ENCODE measurements at regions of chr6 and their contacts with region 1.

Region 1: DNA sequence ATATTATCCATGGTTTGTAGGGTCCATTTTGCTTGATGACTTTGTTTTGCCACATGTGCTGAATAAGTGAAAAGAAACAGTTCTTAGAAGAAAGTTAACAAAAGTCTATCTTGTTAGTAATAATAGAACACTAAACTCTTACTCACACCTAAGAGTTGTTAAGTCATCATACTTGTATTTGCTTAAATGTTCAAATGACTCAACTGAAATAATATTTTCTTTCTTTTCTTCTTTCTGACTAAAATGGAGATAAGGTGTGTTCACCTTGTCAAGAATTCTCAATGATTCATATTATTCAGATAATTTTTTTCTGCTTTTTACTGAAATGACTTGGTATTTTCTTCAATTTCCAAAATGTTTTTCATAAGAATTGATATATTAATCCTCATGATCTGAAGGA is 327.2 kb downstream of the HTR1B start:
- DNase-seq: peak; percentile 28
- H3K4me3 Mint-ChIP-seq: no peak overlapping the region
- H3K27ac Mint-ChIP-seq: no peak overlapping the region
- H3K4me1 Mint-ChIP-seq: peaks cover 7% of the 10 kb centered on the region
- H3K27me3 Mint-ChIP-seq: no peaks in the 10 kb centered on the region
- CTCF ChIP-seq: no peak

Region 2: DNA sequence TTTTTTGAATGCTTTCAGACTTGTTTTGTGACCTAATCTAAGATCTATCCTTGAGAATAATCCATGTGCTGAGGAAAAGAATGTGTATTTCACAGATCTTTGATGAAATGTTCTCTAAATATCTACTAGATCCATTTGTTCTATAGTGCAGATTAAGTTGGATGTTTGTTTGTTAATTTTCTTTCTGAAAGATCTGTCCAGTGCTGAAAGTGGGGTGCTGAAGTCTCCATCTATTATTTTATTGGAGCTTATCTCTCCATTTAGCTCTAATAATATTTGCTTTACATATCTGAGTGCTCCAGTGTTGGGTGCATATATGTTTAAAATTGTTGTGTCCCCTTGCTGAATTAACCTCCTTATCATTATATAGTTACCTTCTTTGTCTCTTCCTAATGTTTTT is 23.6 kb after region 1 on chr6:
- CTCF ChIA-PET with region 1: no interaction called
- POLR2A ChIA-PET with region 1: no interaction called
- intact Hi-C with region 1: no loop called
- DNase-seq: no peak
- H3K4me3 Mint-ChIP-seq: no peak overlapping the region
- H3K27ac Mint-ChIP-seq: no peak overlapping the region
- H3K4me1 Mint-ChIP-seq: no peaks in the 10 kb centered on the region
- H3K27me3 Mint-ChIP-seq: no peaks in the 10 kb centered on the region
- CTCF ChIP-seq: no peak

Region 3: DNA sequence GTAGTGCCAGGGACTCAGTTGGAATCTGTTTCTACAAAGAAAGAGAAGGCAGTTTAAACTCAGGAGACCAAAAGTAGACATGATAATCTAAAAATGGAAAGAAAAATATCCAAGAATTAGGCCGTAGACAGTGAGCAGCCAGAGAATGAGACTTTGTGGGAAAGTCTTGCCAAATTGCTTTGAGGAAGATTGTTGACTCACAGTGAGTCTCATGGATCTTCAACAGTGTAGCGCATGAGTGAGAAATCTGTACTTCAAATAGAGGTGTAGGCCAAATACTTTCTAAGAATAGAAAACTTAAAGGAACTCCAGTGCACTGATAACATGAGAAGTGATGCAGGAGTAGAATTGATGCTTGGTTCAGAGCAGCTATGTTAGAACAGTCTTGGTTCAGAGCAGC is 42.7 kb after region 1 on chr6:
- CTCF ChIA-PET with region 1: no interaction called
- POLR2A ChIA-PET with region 1: no interaction called
- intact Hi-C with region 1: loop called (anchors 1 kb)
- DNase-seq: peak; percentile 61
- H3K4me3 Mint-ChIP-seq: no peak overlapping the region
- H3K27ac Mint-ChIP-seq: peak overlapping the region; percentile 74
- H3K4me1 Mint-ChIP-seq: peaks cover 11% of the 10 kb centered on the region
- H3K27me3 Mint-ChIP-seq: no peaks in the 10 kb centered on the region
- CTCF ChIP-seq: no peak

Region 4: DNA sequence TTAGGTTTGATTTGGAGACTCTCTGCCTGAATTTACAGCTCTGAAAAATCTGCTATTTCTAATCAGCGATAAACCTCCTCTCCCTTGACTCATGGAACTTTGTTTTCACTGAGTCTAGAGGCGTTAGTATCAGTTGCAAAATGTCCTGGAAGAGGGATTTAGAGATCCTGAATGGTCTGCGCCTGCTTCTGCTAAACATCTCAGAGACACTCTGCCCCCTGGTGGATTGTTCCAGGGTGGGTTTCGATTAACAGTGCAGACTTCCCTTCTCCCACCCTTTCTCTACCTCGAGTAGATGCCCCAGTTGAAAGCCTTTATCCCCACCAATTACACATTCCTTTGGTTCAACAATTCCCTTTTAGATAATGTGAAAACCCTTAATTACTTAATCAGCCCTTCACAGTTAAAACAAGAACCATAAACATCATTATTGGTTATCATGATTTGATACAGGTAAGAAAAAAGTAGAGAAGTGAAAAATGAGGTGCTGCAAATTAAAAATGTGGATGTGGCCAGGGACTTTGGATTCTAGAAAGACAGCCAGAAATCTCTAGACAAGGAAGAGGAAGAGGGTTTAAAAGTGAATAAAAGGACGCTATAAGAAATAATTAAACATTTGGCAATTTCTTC is 321.7 kb after region 1 on chr6:
- CTCF ChIA-PET with region 1: no interaction called
- POLR2A ChIA-PET with region 1: no interaction called
- intact Hi-C with region 1: no loop called
- DNase-seq: peak; percentile 95
- H3K4me3 Mint-ChIP-seq: no peak overlapping the region
- H3K27ac Mint-ChIP-seq: peak overlapping the region; percentile 4
- H3K4me1 Mint-ChIP-seq: peaks cover 11% of the 10 kb centered on the region
- H3K27me3 Mint-ChIP-seq: no peaks in the 10 kb centered on the region
- CTCF ChIP-seq: peak; percentile 54